Activated CD8-positive, alpha-beta T cell treated with anti-CD3 and anti-CD28 coated beads for 36 hours (primary cell): ENCODE measurements at regions of chr16 and their contacts with region 1.

Region 1: DNA sequence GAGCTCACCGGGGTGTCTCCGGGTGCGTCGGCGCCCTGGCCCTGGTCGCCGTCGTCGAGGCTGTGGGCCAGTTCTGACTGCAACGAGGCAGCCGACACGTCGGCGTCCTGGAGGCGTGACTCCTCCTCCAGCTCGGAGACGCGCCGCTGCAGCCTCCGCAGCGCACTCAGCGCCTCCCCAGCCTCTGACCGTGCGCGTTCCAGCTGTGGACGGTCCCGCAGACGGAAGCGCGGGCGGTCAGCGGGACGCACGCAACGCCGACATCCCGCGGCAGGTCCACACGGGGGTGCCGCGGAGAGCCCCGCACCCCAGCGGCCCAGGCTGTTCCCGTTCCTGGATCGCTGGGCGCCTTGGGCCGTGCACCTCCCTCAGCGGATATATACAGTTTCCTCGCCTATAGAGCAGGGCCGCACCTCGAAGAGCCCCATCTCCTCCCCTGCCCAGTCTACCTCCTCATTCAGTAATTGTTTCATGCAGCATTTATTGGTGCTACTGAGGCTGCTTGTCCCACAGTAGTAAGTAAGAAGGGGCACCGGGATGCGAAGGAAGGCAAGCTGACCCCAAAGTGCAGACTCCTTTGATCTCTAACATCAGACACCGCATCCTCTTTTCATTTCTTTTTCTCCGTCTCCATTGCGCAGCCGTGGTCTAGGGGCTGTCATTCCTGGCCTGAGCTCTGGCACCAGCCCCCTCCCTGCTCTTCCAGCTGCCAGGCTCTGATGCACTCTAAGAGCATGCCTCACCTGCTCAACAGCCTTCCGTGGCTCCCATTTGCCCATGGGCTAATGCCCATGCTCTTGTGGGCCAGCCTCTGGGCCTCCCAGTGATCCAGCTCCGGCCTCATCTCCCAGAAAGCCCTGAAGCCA is 5.9 kb downstream of the THOC6 start:
- DNase-seq: peak; percentile 79
- ATAC-seq: peak; percentile 60
- H3K4me3 Mint-ChIP-seq: peak overlapping the region; percentile 66
- H3K27ac Mint-ChIP-seq: no peak overlapping the region
- H3K4me1 Mint-ChIP-seq: peaks cover 27% of the 10 kb centered on the region
- H3K27me3 Mint-ChIP-seq: peaks cover 45% of the 10 kb centered on the region
- CTCF ChIP-seq: no peak

Region 2: GRCh38 chr16:3009565-3010390 is 20.0 kb before region 1 on chr16:
- CTCF ChIA-PET with region 1: interaction called, 85 read pairs
- POLR2A ChIA-PET with region 1: interaction called, 6 read pairs
- intact Hi-C with region 1: no loop called
- DNase-seq: no peak
- ATAC-seq: no peak
- H3K4me3 Mint-ChIP-seq: no peak overlapping the region
- H3K27ac Mint-ChIP-seq: no peak overlapping the region
- H3K4me1 Mint-ChIP-seq: peaks cover 21% of the 10 kb centered on the region
- H3K27me3 Mint-ChIP-seq: peaks cover 13% of the 10 kb centered on the region
- CTCF ChIP-seq: no peak

Region 3: DNA sequence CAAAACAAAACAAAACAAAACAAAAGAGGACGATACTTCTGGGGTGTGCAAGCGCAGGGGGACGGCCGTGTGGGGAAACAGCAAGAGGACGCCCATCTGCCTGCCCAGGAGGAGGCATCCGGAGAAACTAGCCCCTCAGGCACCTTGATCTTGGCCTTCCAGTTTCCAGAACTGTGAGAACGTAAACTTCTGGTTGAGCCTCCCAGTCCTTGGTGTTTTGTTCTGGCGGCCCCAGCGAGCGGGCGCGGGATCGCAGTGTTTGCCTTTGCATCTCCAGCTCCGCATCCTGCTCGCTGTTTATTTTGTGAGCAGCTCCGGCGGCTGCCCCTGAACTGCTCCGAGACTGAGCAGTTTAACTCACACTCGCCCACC is 15.6 kb after region 1 on chr16:
- CTCF ChIA-PET with region 1: interaction called, 99 read pairs
- POLR2A ChIA-PET with region 1: interaction called, 9 read pairs
- intact Hi-C with region 1: no loop called
- DNase-seq: peak; percentile 60
- ATAC-seq: peak; percentile 60
- H3K4me3 Mint-ChIP-seq: peak overlapping the region; percentile 69
- H3K27ac Mint-ChIP-seq: peak overlapping the region; percentile 15
- H3K4me1 Mint-ChIP-seq: peaks cover 15% of the 10 kb centered on the region
- H3K27me3 Mint-ChIP-seq: peaks cover 38% of the 10 kb centered on the region
- CTCF ChIP-seq: no peak

Region 4: GRCh38 chr16:3065069-3065741 is 35.4 kb after region 1 on chr16 and contains the start of gene IL32:
- CTCF ChIA-PET with region 1: interaction called, 64 read pairs
- POLR2A ChIA-PET with region 1: interaction called, 3 read pairs
- intact Hi-C with region 1: no loop called
- DNase-seq: peak; percentile 77
- ATAC-seq: peak; percentile 55
- H3K4me3 Mint-ChIP-seq: peak within 1 kb of the TSS; percentile 97
- H3K27ac Mint-ChIP-seq: peak within 1 kb of the TSS; percentile 99
- H3K4me1 Mint-ChIP-seq: peaks cover 55% of the 10 kb centered on the region
- H3K27me3 Mint-ChIP-seq: no peaks in the 10 kb centered on the region
- CTCF ChIP-seq: no peak
- total RNA-seq, gene IL32: 971 to 974 TPM

Region 5: GRCh38 chr16:3134564-3135417 is 105.0 kb after region 1 on chr16 and contains the start of gene ZNF213:
- CTCF ChIA-PET with region 1: interaction called, 105 read pairs
- POLR2A ChIA-PET with region 1: interaction called, 8 read pairs
- intact Hi-C with region 1: no loop called
- DNase-seq: peak; percentile 97
- ATAC-seq: peak; percentile 98
- H3K4me3 Mint-ChIP-seq: peak within 1 kb of the TSS; percentile 99
- H3K27ac Mint-ChIP-seq: peak within 1 kb of the TSS; percentile 98
- H3K4me1 Mint-ChIP-seq: peaks cover 14% of the 10 kb centered on the region
- H3K27me3 Mint-ChIP-seq: no peaks in the 10 kb centered on the region
- CTCF ChIP-seq: no peak
- total RNA-seq, gene ZNF213: 6.1 to 7.5 TPM

Region 6: GRCh38 chr16:3150346-3151218 is 120.8 kb after region 1 on chr16:
- CTCF ChIA-PET with region 1: interaction called, 11 read pairs
- POLR2A ChIA-PET with region 1: interaction called, 3 read pairs
- intact Hi-C with region 1: no loop called
- DNase-seq: peak; percentile 98
- ATAC-seq: peak; percentile 84
- H3K4me3 Mint-ChIP-seq: peak overlapping the region; percentile 85
- H3K27ac Mint-ChIP-seq: peak overlapping the region; percentile 89
- H3K4me1 Mint-ChIP-seq: peaks cover 17% of the 10 kb centered on the region
- H3K27me3 Mint-ChIP-seq: peaks cover 4% of the 10 kb centered on the region
- CTCF ChIP-seq: no peak

Region 7: DNA sequence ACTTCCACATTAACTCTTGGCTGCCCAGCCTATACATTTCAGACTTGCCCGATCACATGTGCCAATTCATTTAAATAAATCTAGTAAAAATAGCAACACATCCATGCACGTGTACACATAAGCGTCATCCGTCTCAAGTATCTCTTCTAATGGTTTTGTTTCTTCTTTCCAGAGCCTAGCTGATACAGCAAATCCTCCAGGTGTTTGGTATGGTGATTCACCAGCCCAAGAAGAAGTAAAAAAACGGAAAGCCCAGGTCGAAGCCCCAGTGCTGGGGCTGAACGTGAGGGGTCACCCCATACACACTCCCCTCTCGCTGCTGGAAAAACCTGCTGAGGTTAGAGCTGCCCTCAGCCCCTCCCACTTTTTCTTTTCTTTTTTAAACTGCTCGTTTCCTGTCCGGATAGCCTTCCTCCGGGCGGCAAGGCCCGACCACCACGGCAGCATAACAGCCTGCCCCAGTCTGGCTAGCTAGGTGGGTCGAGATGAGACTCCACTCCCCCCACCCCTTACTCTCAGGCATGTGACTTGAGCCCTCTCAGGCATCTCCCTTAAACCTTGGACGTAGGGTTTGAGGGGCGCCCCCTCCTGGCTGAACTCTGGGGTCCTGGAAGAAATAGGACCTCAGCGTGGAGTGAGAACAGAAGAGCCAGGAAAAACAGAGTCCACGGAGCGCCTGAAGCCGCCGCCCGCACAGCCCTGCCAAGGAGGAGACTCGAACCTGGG is 144.3 kb after region 1 on chr16:
- CTCF ChIA-PET with region 1: interaction called, 12 read pairs
- POLR2A ChIA-PET with region 1: no interaction called
- intact Hi-C with region 1: no loop called
- DNase-seq: peak; percentile 71
- ATAC-seq: peak; percentile 28
- H3K4me3 Mint-ChIP-seq: peak overlapping the region; percentile 70
- H3K27ac Mint-ChIP-seq: peak overlapping the region; percentile 43
- H3K4me1 Mint-ChIP-seq: peaks cover 34% of the 10 kb centered on the region
- H3K27me3 Mint-ChIP-seq: peaks cover 45% of the 10 kb centered on the region
- CTCF ChIP-seq: peak; percentile 68